Activated CD8-positive, alpha-beta T cell treated with anti-CD3 and anti-CD28 coated beads for 36 hours (primary cell): ENCODE measurements at regions of chr15 and their contacts with region 1.

Region 1: GRCh38 chr15:76973362-76973743 is 21.6 kb upstream of the PSTPIP1 start:
- DNase-seq: peak; percentile 86
- ATAC-seq: peak; percentile 82
- H3K4me3 Mint-ChIP-seq: no peak overlapping the region
- H3K27ac Mint-ChIP-seq: peak overlapping the region; percentile 36
- H3K4me1 Mint-ChIP-seq: peaks cover 24% of the 10 kb centered on the region
- H3K27me3 Mint-ChIP-seq: no peaks in the 10 kb centered on the region
- CTCF ChIP-seq: peak; percentile 90

Region 2: GRCh38 chr15:75884041-75884440 is 1089.3 kb before region 1 on chr15:
- CTCF ChIA-PET with region 1: no interaction called
- POLR2A ChIA-PET with region 1: no interaction called
- intact Hi-C with region 1: no loop called
- DNase-seq: no peak
- ATAC-seq: no peak
- H3K4me3 Mint-ChIP-seq: no peak overlapping the region
- H3K27ac Mint-ChIP-seq: no peak overlapping the region
- H3K4me1 Mint-ChIP-seq: peaks cover 2% of the 10 kb centered on the region
- H3K27me3 Mint-ChIP-seq: no peaks in the 10 kb centered on the region
- CTCF ChIP-seq: no peak

Region 3: GRCh38 chr15:76875911-76876310 is 97.4 kb before region 1 on chr15:
- CTCF ChIA-PET with region 1: no interaction called
- POLR2A ChIA-PET with region 1: no interaction called
- intact Hi-C with region 1: no loop called
- DNase-seq: no peak
- ATAC-seq: no peak
- H3K4me3 Mint-ChIP-seq: no peak overlapping the region
- H3K27ac Mint-ChIP-seq: no peak overlapping the region
- H3K4me1 Mint-ChIP-seq: peaks cover 9% of the 10 kb centered on the region
- H3K27me3 Mint-ChIP-seq: no peaks in the 10 kb centered on the region
- CTCF ChIP-seq: no peak

Region 4: GRCh38 chr15:76941636-76942035 is 31.7 kb before region 1 on chr15:
- CTCF ChIA-PET with region 1: interaction called, 13 read pairs
- POLR2A ChIA-PET with region 1: interaction called, 3 read pairs
- intact Hi-C with region 1: no loop called
- DNase-seq: no peak
- ATAC-seq: no peak
- H3K4me3 Mint-ChIP-seq: no peak overlapping the region
- H3K27ac Mint-ChIP-seq: no peak overlapping the region
- H3K4me1 Mint-ChIP-seq: peaks cover 18% of the 10 kb centered on the region
- H3K27me3 Mint-ChIP-seq: no peaks in the 10 kb centered on the region
- CTCF ChIP-seq: no peak

Region 5: DNA sequence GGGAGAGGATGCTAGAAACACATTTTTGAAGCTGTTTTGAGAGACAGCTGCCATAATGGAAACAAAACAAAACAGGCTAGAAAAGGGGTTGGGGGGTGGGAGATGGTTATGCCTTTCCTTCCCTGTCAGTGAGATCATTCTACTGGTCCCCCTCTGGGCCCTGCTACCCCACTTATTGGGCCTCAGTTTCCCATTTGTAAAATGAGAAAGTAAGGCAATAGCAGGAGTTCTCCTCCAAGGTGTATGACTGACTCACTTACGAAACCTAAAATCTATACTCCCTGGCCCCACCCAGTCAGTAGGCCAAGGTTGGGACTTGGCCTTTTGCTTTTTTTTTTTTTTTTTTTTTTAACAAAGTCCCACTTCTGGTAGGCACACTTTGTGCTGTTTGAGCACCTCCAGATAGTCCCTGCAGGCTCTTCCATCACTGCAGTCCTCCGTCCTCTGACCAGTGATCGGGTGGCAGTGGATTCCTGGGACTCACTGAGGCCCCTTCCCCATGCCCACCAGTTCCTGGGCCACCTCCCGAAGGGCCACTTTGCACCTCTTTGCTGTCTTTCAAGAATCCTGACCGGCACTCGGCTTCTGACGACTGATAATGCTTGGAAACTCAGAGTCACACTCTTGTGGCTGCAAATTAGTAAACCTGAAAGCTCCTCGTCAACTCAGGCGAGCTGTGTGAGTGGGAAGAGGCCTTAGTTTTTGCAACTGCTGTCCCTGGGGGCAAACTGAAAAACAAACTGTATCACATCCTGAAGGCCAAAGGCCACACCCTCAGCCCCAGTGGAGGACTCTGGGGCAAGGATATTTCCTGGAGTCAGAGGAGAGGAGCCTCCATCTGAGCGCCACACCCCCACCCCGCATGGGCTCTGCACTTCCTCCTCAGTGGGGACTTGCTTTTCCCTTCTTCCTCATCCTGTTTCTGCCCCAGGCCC is 14.8 kb after region 1 on chr15:
- CTCF ChIA-PET with region 1: interaction called, 42 read pairs
- POLR2A ChIA-PET with region 1: interaction called, 9 read pairs
- intact Hi-C with region 1: no loop called
- DNase-seq: peak; percentile 91
- ATAC-seq: peak; percentile 89
- H3K4me3 Mint-ChIP-seq: peak overlapping the region; percentile 59
- H3K27ac Mint-ChIP-seq: peak overlapping the region; percentile 100
- H3K4me1 Mint-ChIP-seq: peaks cover 49% of the 10 kb centered on the region
- H3K27me3 Mint-ChIP-seq: no peaks in the 10 kb centered on the region
- CTCF ChIP-seq: no peak

Region 6: DNA sequence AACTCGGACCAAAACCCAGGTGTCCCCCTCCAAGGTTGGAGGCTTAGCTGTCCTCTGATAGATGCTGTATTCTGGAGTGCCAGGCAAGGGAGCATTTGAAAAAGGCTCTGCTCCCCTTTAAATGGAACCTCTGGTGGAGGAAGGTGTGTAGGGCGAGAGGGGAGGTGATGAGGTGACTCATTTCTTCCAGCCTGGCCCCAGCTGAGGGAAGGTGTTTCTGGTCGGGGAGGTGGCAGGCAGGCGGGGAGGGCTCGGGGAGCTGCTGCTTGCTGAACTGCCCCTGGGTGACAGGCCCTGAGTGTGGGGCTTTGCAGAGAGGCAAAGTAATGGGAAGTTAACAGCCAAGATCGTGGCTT is 40.4 kb after region 1 on chr15:
- CTCF ChIA-PET with region 1: interaction called, 86 read pairs
- POLR2A ChIA-PET with region 1: interaction called, 3 read pairs
- intact Hi-C with region 1: loop called (anchors 5 kb)
- DNase-seq: peak; percentile 97
- ATAC-seq: peak; percentile 83
- H3K4me3 Mint-ChIP-seq: peak overlapping the region; percentile 57
- H3K27ac Mint-ChIP-seq: peak overlapping the region; percentile 100
- H3K4me1 Mint-ChIP-seq: peaks cover 97% of the 10 kb centered on the region
- H3K27me3 Mint-ChIP-seq: no peaks in the 10 kb centered on the region
- CTCF ChIP-seq: peak; percentile 24

Region 7: DNA sequence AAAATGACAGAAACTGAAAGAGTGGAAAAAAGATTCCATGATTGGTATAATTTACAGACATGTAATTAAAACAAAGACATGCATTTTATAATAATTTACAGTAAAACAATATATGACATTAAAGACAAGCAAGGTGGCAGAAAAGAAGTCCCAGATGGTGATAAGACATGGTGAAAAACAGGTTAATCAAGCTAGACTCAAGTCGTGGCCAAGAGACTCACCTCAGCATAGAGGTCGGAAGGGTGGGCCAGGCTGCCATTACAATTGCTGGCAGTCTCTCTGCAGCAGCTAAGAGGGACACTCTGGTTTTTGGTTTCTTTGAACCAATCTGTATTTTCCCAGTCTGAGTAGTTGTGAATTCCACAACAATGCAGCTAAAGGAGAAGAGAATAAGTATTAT is 79.2 kb after region 1 on chr15:
- CTCF ChIA-PET with region 1: interaction called, 10 read pairs
- POLR2A ChIA-PET with region 1: no interaction called
- intact Hi-C with region 1: no loop called
- DNase-seq: no peak
- ATAC-seq: no peak
- H3K4me3 Mint-ChIP-seq: no peak overlapping the region
- H3K27ac Mint-ChIP-seq: no peak overlapping the region
- H3K4me1 Mint-ChIP-seq: peaks cover 15% of the 10 kb centered on the region
- H3K27me3 Mint-ChIP-seq: no peaks in the 10 kb centered on the region
- CTCF ChIP-seq: no peak

Region 8: DNA sequence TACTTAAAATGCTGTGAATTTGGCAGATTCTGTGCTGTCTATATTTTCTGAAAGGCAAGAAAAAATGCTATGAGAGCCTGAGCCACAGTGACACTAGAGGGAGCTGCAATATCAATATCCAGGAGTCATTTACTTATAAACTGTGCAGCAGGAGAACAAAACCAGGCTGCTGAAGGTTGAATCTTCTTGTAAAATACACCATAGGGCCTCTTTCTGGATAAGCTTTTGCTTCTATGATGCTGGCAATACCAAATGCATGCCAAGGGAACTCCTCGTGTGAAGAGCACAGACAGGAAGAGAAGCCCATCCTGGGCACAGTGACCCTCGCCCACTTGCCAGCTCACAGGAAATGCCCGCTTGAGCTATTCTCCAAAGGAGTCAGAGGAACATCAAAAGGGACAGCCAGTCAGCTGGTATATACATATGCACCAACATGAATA is 145.5 kb after region 1 on chr15:
- CTCF ChIA-PET with region 1: interaction called, 24 read pairs
- POLR2A ChIA-PET with region 1: no interaction called
- intact Hi-C with region 1: no loop called
- DNase-seq: peak; percentile 61
- ATAC-seq: peak; percentile 67
- H3K4me3 Mint-ChIP-seq: no peak overlapping the region
- H3K27ac Mint-ChIP-seq: no peak overlapping the region
- H3K4me1 Mint-ChIP-seq: peaks cover 12% of the 10 kb centered on the region
- H3K27me3 Mint-ChIP-seq: no peaks in the 10 kb centered on the region
- CTCF ChIP-seq: peak; percentile 83